CD8-positive, alpha-beta T cell (primary cell): ENCODE measurements at regions of chr14 and their contacts with region 1.

Region 1: GRCh38 chr14:99271951-99272631 is at the start of gene BCL11B:
- DNase-seq: peak in 8 of 9 experiments; percentile 74 to 93 (median 89)
- ATAC-seq: peak; percentile 73
- H3K4me3 ChIP-seq: peak within 1 kb of the TSS; percentile 81 to 88
- H3K4me3 Mint-ChIP-seq: peak within 1 kb of the TSS; percentile 99
- H3K27ac ChIP-seq: peak within 1 kb of the TSS; percentile 68 to 97
- H3K27ac Mint-ChIP-seq: peak within 1 kb of the TSS; percentile 98
- H3K4me1 ChIP-seq: peaks cover 17% of the 10 kb centered on the region
- H3K4me1 Mint-ChIP-seq: peaks cover 34% of the 10 kb centered on the region
- H3K27me3 ChIP-seq: no peaks in the 10 kb centered on the region
- H3K27me3 Mint-ChIP-seq: no peaks in the 10 kb centered on the region
- CTCF ChIP-seq: peak; percentile 61
- total RNA-seq, gene BCL11B: 273 to 284 TPM

Region 2: GRCh38 chr14:97299661-97300060 is 1972.4 kb before region 1 on chr14:
- CTCF ChIA-PET with region 1: interaction called, 3 read pairs
- POLR2A ChIA-PET with region 1: no interaction called
- intact Hi-C with region 1: loop called in 1 of 2 experiments (anchors 5 kb)
- DNase-seq: peak in 7 of 9 experiments; percentile 9 to 64 (median 29)
- ATAC-seq: no peak
- H3K4me3 ChIP-seq: no peak overlapping the region
- H3K4me3 Mint-ChIP-seq: no peak overlapping the region
- H3K27ac ChIP-seq: no peak overlapping the region
- H3K27ac Mint-ChIP-seq: no peak overlapping the region
- H3K4me1 ChIP-seq: peaks cover 4% of the 10 kb centered on the region
- H3K4me1 Mint-ChIP-seq: peaks cover 16% of the 10 kb centered on the region
- H3K27me3 ChIP-seq: no peaks in the 10 kb centered on the region
- H3K27me3 Mint-ChIP-seq: peaks cover 1% of the 10 kb centered on the region
- CTCF ChIP-seq: no peak

Region 3: DNA sequence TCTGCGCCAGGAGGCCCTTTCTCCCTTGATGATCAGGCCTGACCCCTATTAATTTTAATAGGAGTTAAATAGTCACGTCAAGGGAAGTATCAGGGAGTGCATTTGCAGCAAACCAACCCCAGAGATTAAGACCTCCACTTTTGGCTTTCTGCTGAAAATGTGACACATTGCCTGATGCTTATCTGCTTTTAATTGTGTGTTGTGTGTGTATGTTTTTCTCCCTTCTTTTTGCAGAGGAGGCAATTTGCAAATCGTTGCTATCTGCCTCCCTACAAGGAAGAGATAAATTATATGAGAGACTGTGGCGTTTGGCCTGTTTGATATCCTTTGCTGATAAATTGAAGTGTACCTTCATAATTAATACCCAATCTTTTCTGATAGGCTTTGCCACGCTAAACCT is 1652.0 kb before region 1 on chr14:
- CTCF ChIA-PET with region 1: no interaction called
- POLR2A ChIA-PET with region 1: interaction called, 4 read pairs
- intact Hi-C with region 1: loop called in 1 of 2 experiments (anchors 5 kb)
- DNase-seq: peak in 1 of 9 experiments; percentile 42
- ATAC-seq: peak; percentile 15
- H3K4me3 ChIP-seq: peak overlapping the region in 1 of 2 experiments; percentile 12
- H3K4me3 Mint-ChIP-seq: peak overlapping the region; percentile 83
- H3K27ac ChIP-seq: peak overlapping the region; percentile 36 to 84
- H3K27ac Mint-ChIP-seq: peak overlapping the region; percentile 98
- H3K4me1 ChIP-seq: peaks cover 43% of the 10 kb centered on the region
- H3K4me1 Mint-ChIP-seq: peaks cover 53% of the 10 kb centered on the region
- H3K27me3 ChIP-seq: no peaks in the 10 kb centered on the region
- H3K27me3 Mint-ChIP-seq: no peaks in the 10 kb centered on the region
- CTCF ChIP-seq: no peak

Region 4: GRCh38 chr14:97978341-97978740 is 1293.8 kb before region 1 on chr14:
- CTCF ChIA-PET with region 1: interaction called, 12 read pairs
- POLR2A ChIA-PET with region 1: interaction called, 12 read pairs
- intact Hi-C with region 1: loop called (anchors 1 to 2 kb)
- DNase-seq: peak; percentile 46 to 88 (median 80)
- ATAC-seq: peak; percentile 76
- H3K4me3 ChIP-seq: peak overlapping the region; percentile 66 to 75
- H3K4me3 Mint-ChIP-seq: peak overlapping the region; percentile 82
- H3K27ac ChIP-seq: peak overlapping the region; percentile 73 to 77
- H3K27ac Mint-ChIP-seq: peak overlapping the region; percentile 88
- H3K4me1 ChIP-seq: peaks cover 37% of the 10 kb centered on the region
- H3K4me1 Mint-ChIP-seq: peaks cover 62% of the 10 kb centered on the region
- H3K27me3 ChIP-seq: no peaks in the 10 kb centered on the region
- H3K27me3 Mint-ChIP-seq: no peaks in the 10 kb centered on the region
- CTCF ChIP-seq: peak; percentile 53

Region 5: DNA sequence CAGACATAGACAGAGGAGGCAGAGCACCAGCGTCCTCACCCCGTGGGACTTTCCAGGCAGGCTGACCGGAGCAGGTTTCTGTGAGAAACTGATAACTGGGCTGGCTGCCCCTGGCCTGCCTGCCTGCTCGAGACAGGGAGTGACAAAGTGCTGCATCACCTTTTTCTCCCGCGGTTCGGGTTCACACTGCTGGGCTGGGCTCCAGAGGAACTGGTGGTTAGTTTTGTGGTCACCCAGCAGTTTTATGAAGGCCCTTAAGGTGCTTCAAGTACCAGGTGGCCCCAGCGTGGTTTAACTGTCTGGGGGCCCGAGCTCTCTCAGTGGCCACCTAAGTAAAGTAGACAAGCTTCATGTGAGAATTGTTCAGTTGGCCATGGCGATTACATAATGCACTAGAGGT is 1073.7 kb before region 1 on chr14:
- CTCF ChIA-PET with region 1: interaction called, 6 read pairs
- POLR2A ChIA-PET with region 1: interaction called, 4 read pairs
- intact Hi-C with region 1: loop called (anchors 2 to 5 kb)
- DNase-seq: peak in 7 of 9 experiments; percentile 35 to 79 (median 60)
- ATAC-seq: peak; percentile 42
- H3K4me3 ChIP-seq: peak overlapping the region in 1 of 2 experiments; percentile 12
- H3K4me3 Mint-ChIP-seq: peak overlapping the region; percentile 54
- H3K27ac ChIP-seq: peak overlapping the region in 1 of 2 experiments; percentile 51
- H3K27ac Mint-ChIP-seq: peak overlapping the region; percentile 85
- H3K4me1 ChIP-seq: peaks cover 68% of the 10 kb centered on the region
- H3K4me1 Mint-ChIP-seq: peaks cover 93% of the 10 kb centered on the region
- H3K27me3 ChIP-seq: no peaks in the 10 kb centered on the region
- H3K27me3 Mint-ChIP-seq: no peaks in the 10 kb centered on the region
- CTCF ChIP-seq: no peak

Region 6: DNA sequence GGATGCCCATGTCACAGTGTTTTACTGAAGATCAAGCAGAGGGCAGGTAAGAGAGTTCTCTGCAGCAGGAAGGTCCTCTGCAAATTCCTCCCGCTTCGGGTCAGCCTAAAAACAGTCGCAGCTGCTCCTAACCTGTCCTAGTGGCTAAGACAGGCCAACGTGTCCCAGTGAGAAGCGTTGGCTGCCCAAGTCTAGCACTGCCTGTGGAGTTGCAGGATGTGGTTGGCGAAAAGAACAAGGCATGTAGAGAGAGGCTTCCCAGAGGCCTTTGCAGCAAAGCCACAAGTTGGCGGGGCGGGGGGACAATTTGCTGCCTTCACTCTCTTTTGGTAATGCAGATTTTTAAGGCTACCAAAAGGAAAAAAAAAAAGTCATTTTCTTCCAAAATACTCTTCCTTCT is 340.2 kb before region 1 on chr14:
- CTCF ChIA-PET with region 1: interaction called, 5 read pairs
- POLR2A ChIA-PET with region 1: interaction called, 3 read pairs
- intact Hi-C with region 1: loop called (anchors 1 kb)
- DNase-seq: peak; percentile 57 to 89 (median 80)
- ATAC-seq: peak; percentile 96
- H3K4me3 ChIP-seq: peak overlapping the region; percentile 15 to 16
- H3K4me3 Mint-ChIP-seq: peak overlapping the region; percentile 74
- H3K27ac ChIP-seq: peak overlapping the region in 1 of 2 experiments; percentile 22
- H3K27ac Mint-ChIP-seq: peak overlapping the region; percentile 92
- H3K4me1 ChIP-seq: peaks cover 79% of the 10 kb centered on the region
- H3K4me1 Mint-ChIP-seq: peaks cover 93% of the 10 kb centered on the region
- H3K27me3 ChIP-seq: no peaks in the 10 kb centered on the region
- H3K27me3 Mint-ChIP-seq: no peaks in the 10 kb centered on the region
- CTCF ChIP-seq: no peak

Region 7: DNA sequence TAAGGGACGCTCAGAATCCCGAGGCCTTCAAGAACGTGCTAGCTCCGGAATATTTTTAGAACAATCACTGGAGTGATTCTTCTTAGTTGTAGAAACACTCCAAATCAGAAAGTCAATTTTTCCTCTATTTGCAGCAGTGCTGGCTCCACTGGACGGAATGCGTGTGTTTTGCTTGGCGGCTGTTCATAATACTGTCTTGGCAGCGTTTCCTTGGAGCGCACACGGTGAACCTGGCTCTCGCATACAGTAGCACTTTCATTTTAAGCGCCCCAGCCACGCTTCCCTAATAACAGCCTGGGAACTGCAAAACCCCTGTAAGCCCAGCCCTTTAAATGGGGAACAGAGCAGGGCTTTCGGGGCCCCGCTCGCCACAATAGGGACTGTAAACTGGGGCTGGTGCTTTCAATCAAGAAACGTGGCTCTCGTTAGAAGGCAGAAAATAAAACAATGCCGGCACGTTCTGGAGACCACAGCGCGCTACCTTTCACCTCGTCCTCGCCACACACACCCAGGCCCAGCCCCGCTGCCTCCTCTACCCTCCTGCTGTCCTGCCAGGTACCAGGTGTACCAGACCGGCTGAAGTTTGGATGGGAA is 80.0 kb before region 1 on chr14:
- CTCF ChIA-PET with region 1: interaction called, 120 read pairs
- POLR2A ChIA-PET with region 1: interaction called, 2,179 read pairs
- intact Hi-C with region 1: loop called (anchors 2 kb)
- DNase-seq: peak in 3 of 9 experiments; percentile 55 to 75 (median 64)
- ATAC-seq: peak; percentile 38
- H3K4me3 ChIP-seq: peak overlapping the region; percentile 36 to 44
- H3K4me3 Mint-ChIP-seq: peak overlapping the region; percentile 87
- H3K27ac ChIP-seq: peak overlapping the region; percentile 71 to 76
- H3K27ac Mint-ChIP-seq: peak overlapping the region; percentile 99
- H3K4me1 ChIP-seq: peaks cover 97% of the 10 kb centered on the region
- H3K4me1 Mint-ChIP-seq: peaks cover 96% of the 10 kb centered on the region
- H3K27me3 ChIP-seq: no peaks in the 10 kb centered on the region
- H3K27me3 Mint-ChIP-seq: no peaks in the 10 kb centered on the region
- CTCF ChIP-seq: no peak

Region 8: DNA sequence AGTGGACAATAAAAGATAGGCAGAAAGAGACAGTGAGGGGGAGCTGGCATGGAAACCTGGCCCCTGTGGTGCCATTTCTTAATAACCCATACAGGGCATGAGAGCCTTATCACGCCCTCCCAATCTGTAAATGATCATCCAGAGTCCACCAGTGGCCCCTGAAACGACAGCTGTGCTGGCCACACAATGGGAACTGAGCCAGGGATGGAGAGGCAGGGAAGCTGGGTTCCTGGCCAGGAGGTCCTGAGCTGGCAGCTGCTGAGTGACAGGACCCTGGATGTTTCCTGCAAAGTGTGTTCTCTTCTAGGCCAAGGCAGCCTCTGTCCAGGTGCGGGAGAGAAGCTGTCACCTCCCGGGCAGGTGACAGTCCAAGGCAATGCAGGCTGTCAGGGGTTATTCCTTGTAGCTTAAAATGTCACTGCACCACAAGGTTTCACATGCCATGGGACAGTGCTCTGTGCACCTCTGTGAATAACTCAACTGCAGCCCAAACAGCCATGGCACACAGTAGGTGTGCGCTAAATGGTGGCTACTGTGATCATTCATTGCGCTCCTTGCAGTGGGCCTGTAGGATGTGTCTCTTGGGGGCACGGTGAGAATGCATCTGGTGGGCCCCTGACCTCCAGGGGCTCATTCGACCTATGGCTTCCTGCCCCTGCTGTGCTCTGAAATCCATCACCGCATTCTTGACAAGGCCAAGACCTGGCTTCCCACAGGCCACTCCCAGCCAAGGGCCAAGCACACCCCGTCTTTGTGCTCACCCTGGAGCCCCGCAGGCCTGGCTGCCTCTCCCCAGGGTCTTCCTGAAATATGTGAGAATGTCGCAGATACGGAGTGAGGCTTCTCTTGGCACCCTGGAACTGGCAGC is 46.2 kb after region 1 on chr14:
- CTCF ChIA-PET with region 1: no interaction called
- POLR2A ChIA-PET with region 1: no interaction called
- intact Hi-C with region 1: no loop called
- DNase-seq: no peak
- ATAC-seq: no peak
- H3K4me3 ChIP-seq: no peak overlapping the region
- H3K4me3 Mint-ChIP-seq: no peak overlapping the region
- H3K27ac ChIP-seq: no peak overlapping the region
- H3K27ac Mint-ChIP-seq: no peak overlapping the region
- H3K4me1 ChIP-seq: no peaks in the 10 kb centered on the region
- H3K4me1 Mint-ChIP-seq: peaks cover 7% of the 10 kb centered on the region
- H3K27me3 ChIP-seq: no peaks in the 10 kb centered on the region
- H3K27me3 Mint-ChIP-seq: no peaks in the 10 kb centered on the region
- CTCF ChIP-seq: no peak